Activated naive CD4-positive, alpha-beta T cell treated with anti-CD3 and anti-CD28 coated beads, Interleukin-2, amount 10 ng/mL, durations not matched to agents 7 days and 5 days (primary cell): ENCODE measurements at regions of chr4 and their contacts with region 1.

Region 1: GRCh38 chr4:164731827-164732474 is 22.0 kb upstream of the SMIM31 start:
- DNase-seq: peak; percentile 55
- H3K4me3 Mint-ChIP-seq: no peak overlapping the region
- H3K27ac Mint-ChIP-seq: no peak overlapping the region
- H3K4me1 Mint-ChIP-seq: peaks cover 4% of the 10 kb centered on the region
- H3K27me3 Mint-ChIP-seq: no peaks in the 10 kb centered on the region

Region 2: GRCh38 chr4:163554870-163555465 is 1177.0 kb before region 1 on chr4:
- CTCF ChIA-PET with region 1: interaction called, 15 read pairs
- DNase-seq: no peak
- H3K4me3 Mint-ChIP-seq: no peak overlapping the region
- H3K27ac Mint-ChIP-seq: no peak overlapping the region
- H3K4me1 Mint-ChIP-seq: peaks cover 26% of the 10 kb centered on the region
- H3K27me3 Mint-ChIP-seq: no peaks in the 10 kb centered on the region

Region 3: DNA sequence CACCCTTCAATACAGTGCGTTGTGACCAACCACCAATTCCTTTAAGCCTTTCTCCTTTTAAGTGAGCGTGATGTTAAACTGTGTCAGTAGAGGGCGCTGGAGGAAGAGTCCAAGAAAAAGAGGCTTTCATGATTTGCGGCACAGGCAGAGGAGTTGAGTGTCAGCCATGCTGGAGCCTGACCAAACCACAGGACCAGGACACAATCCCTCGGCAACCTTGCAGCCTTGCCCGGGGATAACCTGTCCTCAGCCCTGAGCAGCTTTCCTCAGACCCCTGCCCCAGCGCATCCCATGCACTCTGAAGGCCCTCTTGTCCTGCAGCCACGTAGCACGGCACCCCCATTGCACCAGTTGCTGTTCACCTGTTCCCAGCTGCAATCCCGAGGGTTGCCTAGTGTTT is 31.5 kb before region 1 on chr4:
- CTCF ChIA-PET with region 1: interaction called, 18 read pairs
- DNase-seq: no peak
- H3K4me3 Mint-ChIP-seq: no peak overlapping the region
- H3K27ac Mint-ChIP-seq: no peak overlapping the region
- H3K4me1 Mint-ChIP-seq: no peaks in the 10 kb centered on the region
- H3K27me3 Mint-ChIP-seq: no peaks in the 10 kb centered on the region

Region 4: DNA sequence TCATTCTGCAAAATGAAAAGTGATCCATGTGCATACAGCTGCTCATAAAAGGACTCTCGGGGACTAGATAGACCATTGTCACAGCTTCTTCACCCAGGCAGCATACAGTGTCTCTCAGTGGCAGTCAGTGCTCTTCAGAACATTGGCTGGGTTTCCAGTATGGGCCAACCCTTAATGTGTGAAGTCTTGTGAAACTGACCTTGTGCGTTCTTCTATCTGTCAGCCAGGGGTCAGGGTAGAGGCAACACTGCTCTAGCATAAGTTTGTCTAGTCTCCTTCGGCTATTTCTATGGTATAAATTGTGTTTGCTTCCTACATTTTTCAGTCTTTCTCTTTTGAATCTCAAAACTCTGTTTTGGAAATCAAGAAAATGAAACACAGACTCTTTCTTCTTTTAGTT is 15.1 kb before region 1 on chr4:
- CTCF ChIA-PET with region 1: interaction called, 24 read pairs
- DNase-seq: no peak
- H3K4me3 Mint-ChIP-seq: no peak overlapping the region
- H3K27ac Mint-ChIP-seq: no peak overlapping the region
- H3K4me1 Mint-ChIP-seq: no peaks in the 10 kb centered on the region
- H3K27me3 Mint-ChIP-seq: no peaks in the 10 kb centered on the region